ENCODE measurements at regions of chr19 and their contacts with region 1.

Region 1: DNA sequence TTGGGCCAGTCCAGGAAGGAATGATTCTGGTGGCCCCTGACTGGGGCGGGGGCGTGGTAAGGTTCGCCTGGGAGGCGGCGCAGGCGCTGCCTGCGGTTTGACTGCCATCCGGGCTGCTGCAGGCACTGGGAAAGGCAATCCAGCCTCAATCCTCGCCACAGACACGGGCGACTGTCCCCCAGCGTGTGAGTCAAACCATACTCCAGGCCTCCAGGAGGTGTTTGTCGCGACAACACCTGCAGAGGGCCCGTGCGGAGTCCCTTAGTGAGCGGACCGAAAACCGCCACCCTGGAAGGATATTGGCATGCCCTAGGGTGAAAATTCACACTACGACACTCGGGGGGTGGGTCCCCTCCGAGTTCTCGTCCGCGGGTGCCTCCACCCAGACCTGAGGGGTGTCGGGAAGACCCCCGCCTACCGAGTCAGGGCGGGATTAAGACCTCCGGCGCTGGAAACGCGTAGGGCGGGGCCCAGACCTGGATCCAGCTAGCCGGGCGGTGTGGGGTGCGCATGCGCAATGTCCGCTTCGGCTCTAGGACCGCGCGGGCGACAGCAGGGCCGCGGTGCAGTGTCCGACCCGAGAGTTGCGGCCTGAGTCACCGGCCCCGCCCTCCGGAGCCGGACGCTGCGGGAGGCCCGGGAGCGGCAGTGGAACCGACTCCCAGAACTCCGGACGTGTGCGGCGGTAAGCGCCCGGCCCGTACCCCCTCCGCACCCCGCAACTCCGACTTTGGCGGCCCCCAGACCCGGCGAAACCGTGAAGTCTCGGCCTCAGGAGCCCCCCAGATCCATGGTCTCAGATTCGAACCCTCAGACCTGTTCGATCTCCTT is at the start of gene CAPNS1:
- DNase-seq: peak; percentile 95
- ATAC-seq: peak; percentile 76
- H3K4me3 ChIP-seq: peak within 1 kb of the TSS; percentile 76 to 99 (median 89)
- H3K4me3 Mint-ChIP-seq: peak within 1 kb of the TSS; percentile 96
- H3K27ac ChIP-seq: peak within 1 kb of the TSS; percentile 81 to 85
- H3K27ac Mint-ChIP-seq: peak within 1 kb of the TSS; percentile 94
- H3K4me1 ChIP-seq: peaks cover 4 to 14% of the 10 kb centered on the region in 2 donors
- H3K4me1 Mint-ChIP-seq: peaks cover 15% of the 10 kb centered on the region
- H3K27me3 ChIP-seq: no peaks in the 10 kb centered on the region
- H3K27me3 Mint-ChIP-seq: no peaks in the 10 kb centered on the region
- CTCF ChIP-seq: peak; percentile 37
- total RNA-seq, gene CAPNS1: 294 and 296 TPM in 2 replicates

Region 2: DNA sequence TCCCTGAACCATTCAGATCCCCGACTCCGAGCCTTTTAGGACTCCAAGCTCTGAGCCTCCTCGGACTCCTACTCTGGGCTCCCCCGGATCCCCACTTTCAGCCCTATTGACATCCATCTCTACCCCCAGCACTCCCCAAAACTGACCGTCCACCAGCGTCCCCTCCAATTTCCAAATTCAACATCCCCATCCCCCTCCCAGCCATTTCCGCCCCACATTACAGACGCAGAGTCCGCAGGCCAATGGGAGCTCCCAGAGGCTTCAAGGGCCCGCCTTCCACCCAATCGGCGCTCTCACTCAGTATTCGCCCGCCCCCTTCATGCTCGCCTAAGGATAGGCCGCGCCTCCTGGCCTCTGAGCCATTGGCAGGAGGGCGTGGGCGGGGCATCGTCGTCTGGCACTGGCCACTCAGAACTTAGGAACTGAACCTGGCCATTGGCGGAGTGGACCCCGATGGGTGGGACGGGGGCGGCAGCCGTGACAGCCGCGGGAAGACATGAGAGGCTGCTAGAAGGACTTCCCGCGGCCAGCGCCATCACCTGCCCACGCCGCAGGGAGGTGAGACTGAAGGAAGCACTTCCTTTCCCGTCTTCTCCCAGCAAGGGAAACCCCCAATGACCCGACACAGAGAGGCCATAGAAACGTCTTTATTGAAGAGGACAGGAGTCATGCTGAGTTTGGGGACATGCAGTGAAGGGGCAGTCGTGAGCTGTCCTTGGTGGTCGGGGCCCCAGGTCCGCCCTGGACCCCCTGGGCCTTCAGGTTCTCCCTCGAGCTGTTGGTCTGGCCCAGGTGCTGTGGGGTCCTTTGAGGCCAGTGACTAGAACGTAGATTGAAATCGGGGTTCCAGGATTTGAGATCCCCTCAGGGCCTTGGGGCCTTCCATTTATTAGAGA is 125.4 kb before region 1 on chr19 and contains the start of gene ALKBH6:
- CTCF ChIA-PET with region 1: no interaction called
- POLR2A ChIA-PET with region 1: no interaction called
- intact Hi-C with region 1: loop called (anchors 1 kb)
- DNase-seq: peak; percentile 98
- ATAC-seq: peak; percentile 99
- H3K4me3 ChIP-seq: peak within 1 kb of the TSS; percentile 67 to 94 (median 72)
- H3K4me3 Mint-ChIP-seq: peak within 1 kb of the TSS; percentile 99
- H3K27ac ChIP-seq: peak within 1 kb of the TSS; percentile 70 to 86
- H3K27ac Mint-ChIP-seq: peak within 1 kb of the TSS; percentile 93
- H3K4me1 ChIP-seq: peaks cover 16 to 21% of the 10 kb centered on the region in 2 donors
- H3K4me1 Mint-ChIP-seq: peaks cover 28% of the 10 kb centered on the region
- H3K27me3 ChIP-seq: peaks cover 0 to 6% (median 0%) of the 10 kb centered on the region in 4 experiments
- H3K27me3 Mint-ChIP-seq: no peaks in the 10 kb centered on the region
- CTCF ChIP-seq: no peak
- total RNA-seq, gene ALKBH6: 49.4 and 54.5 TPM in 2 replicates

Region 3: GRCh38 chr19:36152352-36153091 is 12.8 kb after region 1 on chr19 and contains the start of gene COX7A1:
- CTCF ChIA-PET with region 1: no interaction called
- POLR2A ChIA-PET with region 1: no interaction called
- intact Hi-C with region 1: no loop called
- DNase-seq: no peak
- ATAC-seq: no peak
- H3K4me3 ChIP-seq: no peak within 1 kb of the TSS
- H3K4me3 Mint-ChIP-seq: no peak within 1 kb of the TSS
- H3K27ac ChIP-seq: no peak within 1 kb of the TSS
- H3K27ac Mint-ChIP-seq: no peak within 1 kb of the TSS
- H3K4me1 ChIP-seq: no peaks in the 10 kb centered on the region
- H3K4me1 Mint-ChIP-seq: no peaks in the 10 kb centered on the region
- H3K27me3 ChIP-seq: no peaks in the 10 kb centered on the region
- H3K27me3 Mint-ChIP-seq: no peaks in the 10 kb centered on the region
- CTCF ChIP-seq: no peak
- total RNA-seq, gene COX7A1: not detected in 2 replicates

Region 4: DNA sequence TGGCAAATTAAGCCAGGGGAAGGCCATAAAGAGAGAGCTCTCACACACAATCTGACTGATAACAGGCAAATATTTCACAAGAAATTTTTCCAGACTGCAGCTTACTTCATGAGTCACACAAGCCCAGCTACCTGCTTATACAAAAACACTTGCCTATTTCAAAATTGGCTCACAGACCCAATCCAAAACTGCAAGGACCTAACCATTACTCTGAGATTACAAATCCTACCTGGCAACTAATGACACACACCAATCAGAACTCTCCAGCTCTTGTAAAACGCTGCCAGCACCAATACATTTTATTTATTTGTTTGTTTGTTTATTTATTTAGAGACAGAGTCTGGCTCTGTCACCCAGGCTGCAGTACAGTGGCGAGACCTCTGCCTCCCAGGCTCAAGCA is 296.8 kb after region 1 on chr19:
- CTCF ChIA-PET with region 1: no interaction called
- POLR2A ChIA-PET with region 1: no interaction called
- intact Hi-C with region 1: no loop called
- DNase-seq: peak; percentile 40
- ATAC-seq: no peak
- H3K4me3 ChIP-seq: no peak overlapping the region
- H3K4me3 Mint-ChIP-seq: no peak overlapping the region
- H3K27ac ChIP-seq: no peak overlapping the region
- H3K27ac Mint-ChIP-seq: no peak overlapping the region
- H3K4me1 ChIP-seq: no peaks in the 10 kb centered on the region
- H3K4me1 Mint-ChIP-seq: no peaks in the 10 kb centered on the region
- H3K27me3 ChIP-seq: no peaks in the 10 kb centered on the region
- H3K27me3 Mint-ChIP-seq: no peaks in the 10 kb centered on the region
- CTCF ChIP-seq: no peak

Measured in B cell (primary cell).